ENCODE measurements at regions of chr6 and their contacts with region 1.

Region 1: DNA sequence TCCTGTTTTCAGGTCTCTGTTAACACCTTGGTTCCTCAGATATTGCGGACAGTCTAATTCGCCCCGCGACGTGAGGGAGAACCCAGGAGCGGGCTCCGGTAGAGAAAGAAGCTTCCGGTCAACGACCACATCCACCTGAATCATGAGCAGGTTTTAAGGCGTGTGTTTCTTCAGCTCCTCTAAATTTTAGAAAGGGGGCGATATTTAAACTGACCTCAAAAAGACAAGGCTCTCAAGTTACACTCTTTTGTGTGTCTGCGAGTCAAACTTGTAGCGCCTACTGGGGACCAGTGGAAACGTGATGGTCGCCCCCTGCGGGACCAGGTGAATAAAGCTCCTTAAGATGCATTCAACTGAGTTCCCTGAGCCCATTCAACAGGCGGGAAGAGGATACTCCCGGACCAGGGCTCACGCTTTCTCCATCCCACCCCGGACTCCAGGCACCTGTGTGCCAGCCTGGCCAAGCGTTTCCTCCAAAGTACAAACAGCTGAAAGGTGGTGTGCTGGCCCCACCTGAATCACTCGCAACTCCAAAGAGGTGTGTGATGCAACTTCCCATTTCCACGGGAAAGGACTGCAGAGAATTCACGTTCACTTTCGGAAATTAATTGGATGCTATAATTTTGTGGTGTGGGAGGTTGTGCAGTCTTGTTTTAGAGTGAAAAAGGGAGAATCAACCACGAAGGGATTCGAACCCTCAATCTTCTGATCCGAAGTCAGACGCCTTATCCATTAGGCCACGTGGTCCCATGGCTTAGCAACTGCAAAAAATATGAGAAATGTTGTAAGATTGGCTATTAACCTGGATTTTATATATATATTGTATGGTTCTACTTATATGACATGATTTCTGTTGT is 17.0 kb downstream of the GPX5 start:
- DNase-seq: peak; percentile 72
- H3K4me3 ChIP-seq: peak overlapping the region; percentile 61 to 66
- H3K27ac ChIP-seq: peak overlapping the region in 1 of 2 experiments; percentile 18; a peak in 1 of 4 replicates
- H3K4me1 ChIP-seq: no peaks in the 10 kb centered on the region; a peak in 2 of 4 replicates
- H3K27me3 ChIP-seq: no peaks in the 10 kb centered on the region
- CTCF ChIP-seq: peak; percentile 64
- EP300 ChIP-seq: no peak
- RAD21 ChIP-seq: peak; percentile 57

Region 2: DNA sequence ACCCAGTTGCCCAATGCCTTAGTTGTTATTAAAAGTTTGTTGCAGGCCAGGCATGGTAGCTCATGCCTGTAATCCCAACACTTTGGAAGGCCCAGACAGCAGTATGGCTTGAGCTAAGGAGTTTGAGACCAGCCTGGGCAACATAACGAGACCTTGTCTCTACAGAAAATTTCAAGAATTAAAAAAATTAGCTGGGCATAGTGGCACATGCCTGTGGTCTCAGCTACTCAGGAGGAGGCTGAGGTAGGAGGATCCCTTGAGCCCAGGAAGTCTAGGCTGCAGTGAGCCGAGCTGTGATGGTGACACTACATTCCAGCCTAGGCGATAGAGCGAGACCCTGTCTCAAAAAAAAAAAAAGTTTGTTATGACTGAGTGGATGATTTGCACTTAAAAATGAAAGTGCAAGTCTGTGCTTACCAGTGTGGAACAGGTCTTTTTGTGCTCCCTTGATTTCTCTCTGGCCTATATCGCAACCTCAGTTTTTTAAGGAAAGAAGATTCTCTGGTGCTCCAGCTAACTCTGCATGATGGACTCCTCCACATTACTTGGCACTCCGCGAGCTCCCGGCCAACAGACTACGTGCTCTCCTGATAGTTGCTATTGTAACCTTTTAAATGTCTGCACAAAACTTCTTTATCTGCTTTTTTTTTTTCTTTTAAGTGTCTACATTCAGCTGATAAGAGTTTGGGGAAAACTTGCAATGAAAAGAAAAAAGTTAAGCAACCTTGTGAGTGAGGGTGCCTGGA is 170.8 kb before region 1 on chr6:
- CTCF ChIA-PET with region 1: no interaction called
- POLR2A ChIA-PET with region 1: no interaction called
- DNase-seq: no peak
- H3K4me3 ChIP-seq: no peak overlapping the region
- H3K27ac ChIP-seq: no peak overlapping the region
- H3K4me1 ChIP-seq: no peaks in the 10 kb centered on the region
- H3K27me3 ChIP-seq: no peaks in the 10 kb centered on the region
- CTCF ChIP-seq: no peak
- EP300 ChIP-seq: no peak
- RAD21 ChIP-seq: no peak

Region 3: GRCh38 chr6:28496099-28496779 is 46.4 kb before region 1 on chr6:
- CTCF ChIA-PET with region 1: interaction called, 10 read pairs
- POLR2A ChIA-PET with region 1: no interaction called
- DNase-seq: no peak
- H3K4me3 ChIP-seq: no peak overlapping the region
- H3K27ac ChIP-seq: no peak overlapping the region
- H3K4me1 ChIP-seq: no peaks in the 10 kb centered on the region
- H3K27me3 ChIP-seq: no peaks in the 10 kb centered on the region; the same call in 1 of the 2 replicates
- CTCF ChIP-seq: peak; percentile 32
- EP300 ChIP-seq: no peak
- RAD21 ChIP-seq: peak; percentile 64

Region 4: DNA sequence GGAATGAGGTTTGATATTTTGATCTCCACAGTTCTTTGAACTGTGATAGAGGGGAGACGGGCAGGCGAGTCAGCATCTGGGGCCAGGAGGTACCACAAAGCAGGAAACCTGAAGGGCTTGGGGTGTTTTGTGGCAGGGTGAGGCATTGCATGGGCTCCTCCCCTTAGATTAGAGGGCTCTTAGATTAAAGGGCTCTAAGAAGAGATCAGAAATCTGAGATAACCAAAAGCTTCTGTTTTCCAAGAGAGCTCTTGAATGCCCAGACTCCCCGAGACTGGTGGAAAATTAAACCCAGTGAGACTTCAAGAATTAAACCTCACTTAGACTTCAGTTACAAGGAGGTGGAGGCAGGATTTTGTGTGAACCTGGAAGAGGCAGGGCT is 19.4 kb before region 1 on chr6:
- CTCF ChIA-PET with region 1: interaction called, 10 read pairs
- POLR2A ChIA-PET with region 1: no interaction called
- DNase-seq: no peak
- H3K4me3 ChIP-seq: no peak overlapping the region
- H3K27ac ChIP-seq: no peak overlapping the region
- H3K4me1 ChIP-seq: no peaks in the 10 kb centered on the region
- H3K27me3 ChIP-seq: peaks cover 22% of the 10 kb centered on the region; the same call in 1 of the 2 replicates
- CTCF ChIP-seq: no peak
- EP300 ChIP-seq: no peak
- RAD21 ChIP-seq: no peak

Region 5: GRCh38 chr6:28553986-28554881 is 11.6 kb after region 1 on chr6:
- CTCF ChIA-PET with region 1: interaction called, 12 read pairs
- POLR2A ChIA-PET with region 1: interaction called, 3 read pairs
- DNase-seq: no peak
- H3K4me3 ChIP-seq: no peak overlapping the region
- H3K27ac ChIP-seq: no peak overlapping the region
- H3K4me1 ChIP-seq: no peaks in the 10 kb centered on the region
- H3K27me3 ChIP-seq: no peaks in the 10 kb centered on the region; the same call in 1 of the 2 replicates
- CTCF ChIP-seq: no peak
- EP300 ChIP-seq: no peak
- RAD21 ChIP-seq: no peak

Region 6: GRCh38 chr6:28580475-28580874 is 37.8 kb after region 1 on chr6:
- CTCF ChIA-PET with region 1: interaction called, 21 read pairs
- POLR2A ChIA-PET with region 1: no interaction called
- DNase-seq: no peak
- H3K4me3 ChIP-seq: no peak overlapping the region
- H3K27ac ChIP-seq: no peak overlapping the region
- H3K4me1 ChIP-seq: peaks cover 3 to 6% of the 10 kb centered on the region in 2 experiments; a peak in 2 of 4 replicates
- H3K27me3 ChIP-seq: no peaks in the 10 kb centered on the region
- CTCF ChIP-seq: peak; percentile 25
- EP300 ChIP-seq: no peak
- RAD21 ChIP-seq: peak; percentile 50

Region 7: DNA sequence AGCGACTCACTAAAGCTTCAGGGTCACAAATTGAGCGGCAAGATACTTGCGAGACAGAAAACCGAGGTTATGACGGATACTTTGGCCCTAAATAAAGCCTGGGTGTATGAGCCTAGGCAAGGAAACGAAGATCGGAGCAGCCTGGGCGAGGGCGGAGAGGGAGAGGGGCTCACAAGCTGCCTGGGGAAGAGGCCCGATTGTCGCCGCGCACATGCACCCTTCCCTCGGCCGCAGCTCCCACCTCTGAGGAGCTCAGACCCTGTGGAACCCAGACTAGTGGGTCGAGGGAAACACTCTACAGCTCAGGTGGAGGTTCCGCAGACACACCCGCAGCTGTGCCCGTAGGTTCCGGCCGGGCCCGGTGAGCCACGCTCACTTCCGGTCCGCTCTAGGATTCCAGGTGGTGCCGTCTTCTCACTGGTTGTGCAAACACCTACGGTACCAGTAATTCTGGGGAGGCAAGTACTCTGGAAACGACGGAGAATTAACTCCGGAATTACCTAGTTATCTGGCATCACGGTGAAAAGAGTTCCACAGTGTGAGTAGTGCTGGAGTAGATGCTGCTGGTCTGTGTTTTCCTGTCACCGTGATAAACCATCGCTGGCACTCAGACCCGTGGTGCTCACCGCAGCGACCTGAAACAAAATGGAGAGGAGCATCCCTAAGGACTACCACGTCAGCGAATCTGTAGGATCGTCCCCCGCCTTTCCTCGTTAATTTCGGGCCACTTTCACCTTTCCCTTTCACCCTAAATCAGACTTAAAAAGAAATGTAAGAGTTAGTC is 44.5 kb after region 1 on chr6:
- CTCF ChIA-PET with region 1: interaction called, 21 read pairs
- POLR2A ChIA-PET with region 1: no interaction called
- DNase-seq: peak; percentile 80
- H3K4me3 ChIP-seq: peak overlapping the region; percentile 66 to 90
- H3K27ac ChIP-seq: peak overlapping the region in 1 of 2 experiments; percentile 89; a peak in 3 of 4 replicates
- H3K4me1 ChIP-seq: peaks cover 11 to 14% of the 10 kb centered on the region in 2 experiments; a peak in 3 of 4 replicates
- H3K27me3 ChIP-seq: no peaks in the 10 kb centered on the region
- CTCF ChIP-seq: no peak
- EP300 ChIP-seq: no peak
- RAD21 ChIP-seq: no peak

Region 8: GRCh38 chr6:28683944-28684538 is 141.4 kb after region 1 on chr6:
- CTCF ChIA-PET with region 1: interaction called, 10 read pairs
- POLR2A ChIA-PET with region 1: no interaction called
- DNase-seq: peak; percentile 52
- H3K4me3 ChIP-seq: peak overlapping the region in 1 of 2 experiments; percentile 39; a peak in 1 of 4 replicates
- H3K27ac ChIP-seq: no peak overlapping the region
- H3K4me1 ChIP-seq: 0 out of 4 replicates have a peak, but pooled peaks cover 0 to 6% of the 10 kb centered on the region in 2 experiments
- H3K27me3 ChIP-seq: peaks cover 38% of the 10 kb centered on the region
- CTCF ChIP-seq: peak; percentile 74
- EP300 ChIP-seq: no peak
- RAD21 ChIP-seq: peak; percentile 85